ENCODE measurements at regions of chr6 and their contacts with region 1.

Region 1: GRCh38 chr6:73329201-73329600 is 24.9 kb downstream of the DPPA5 start:
- DNase-seq: no peak
- ATAC-seq: no peak
- H3K4me3 ChIP-seq: no peak overlapping the region
- H3K27ac ChIP-seq: no peak overlapping the region
- H3K4me1 ChIP-seq: no peaks in the 10 kb centered on the region; a peak in 1 of 5 replicates
- H3K27me3 ChIP-seq: peaks cover 3 to 9% of the 10 kb centered on the region in 2 experiments; a peak in 4 of 5 replicates
- CTCF ChIP-seq: no peak
- EP300 ChIP-seq: no peak
- POLR2A ChIP-seq: no peak
- RAD21 ChIP-seq: no peak

Region 2: GRCh38 chr6:72411872-72412708 is 917.1 kb before region 1 on chr6:
- CTCF ChIA-PET with region 1: interaction called, 3 read pairs
- POLR2A ChIA-PET with region 1: no interaction called
- in situ Hi-C with region 1: loop called (anchors 25 kb)
- intact Hi-C with region 1: no loop called
- DNase-seq: peak; percentile 85 to 86 (median 85)
- ATAC-seq: peak; percentile 87
- H3K4me3 ChIP-seq: no peak overlapping the region
- H3K27ac ChIP-seq: no peak overlapping the region
- H3K4me1 ChIP-seq: peaks cover 3 to 8% of the 10 kb centered on the region in 2 experiments; a peak in 3 of 5 replicates
- H3K27me3 ChIP-seq: no peaks in the 10 kb centered on the region
- CTCF ChIP-seq: peak; percentile 100
- EP300 ChIP-seq: no peak
- POLR2A ChIP-seq: no peak
- RAD21 ChIP-seq: peak; percentile 100

Region 3: DNA sequence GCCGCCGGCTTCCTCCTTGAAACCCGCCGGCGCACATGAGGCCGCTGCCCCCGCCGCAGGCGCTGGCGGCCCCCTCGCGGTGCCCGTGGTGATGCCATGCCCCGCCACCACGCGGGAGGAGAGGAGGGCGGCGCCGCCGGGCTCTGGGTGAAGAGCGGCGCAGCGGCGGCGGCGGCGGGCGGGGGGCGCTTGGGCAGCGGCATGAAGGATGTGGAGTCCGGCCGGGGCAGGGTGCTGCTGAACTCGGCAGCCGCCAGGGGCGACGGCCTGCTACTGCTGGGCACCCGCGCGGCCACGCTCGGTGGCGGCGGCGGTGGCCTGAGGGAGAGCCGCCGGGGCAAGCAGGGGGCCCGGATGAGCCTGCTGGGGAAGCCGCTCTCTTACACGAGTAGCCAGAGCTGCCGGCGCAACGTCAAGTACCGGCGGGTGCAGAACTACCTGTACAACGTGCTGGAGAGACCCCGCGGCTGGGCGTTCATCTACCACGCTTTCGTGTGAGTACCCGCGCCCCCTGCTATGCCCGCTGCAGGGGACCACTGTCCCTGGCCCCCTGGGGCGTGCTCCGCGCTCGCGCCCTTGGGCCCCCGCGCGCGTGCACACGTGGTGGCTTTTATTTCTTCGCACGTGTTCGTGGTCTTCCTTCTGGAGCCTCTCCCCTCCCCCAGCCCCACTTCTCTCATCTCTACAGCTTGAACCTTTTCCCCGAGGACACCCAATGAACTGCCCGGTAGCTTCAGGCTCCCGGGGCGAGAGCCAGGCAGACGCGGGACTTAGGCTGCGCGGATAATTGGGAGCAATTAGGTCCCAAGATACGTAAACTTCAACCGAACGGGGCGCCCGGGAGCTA is 706.9 kb before region 1 on chr6:
- CTCF ChIA-PET with region 1: no interaction called
- POLR2A ChIA-PET with region 1: interaction called, 3 read pairs
- in situ Hi-C with region 1: no loop called
- intact Hi-C with region 1: loop called (anchors 10 kb)
- DNase-seq: peak; percentile 49 to 60 (median 50)
- ATAC-seq: peak; percentile 58
- H3K4me3 ChIP-seq: peak overlapping the region; percentile 49
- H3K27ac ChIP-seq: peak overlapping the region; percentile 77
- H3K4me1 ChIP-seq: peaks cover 19 to 33% of the 10 kb centered on the region in 2 experiments; a peak in 4 of 5 replicates
- H3K27me3 ChIP-seq: no peaks in the 10 kb centered on the region
- CTCF ChIP-seq: peak in 1 of 3 experiments; percentile 25; a peak in 1 of 6 replicates
- EP300 ChIP-seq: no peak
- POLR2A ChIP-seq: no peak
- RAD21 ChIP-seq: no peak

Region 4: DNA sequence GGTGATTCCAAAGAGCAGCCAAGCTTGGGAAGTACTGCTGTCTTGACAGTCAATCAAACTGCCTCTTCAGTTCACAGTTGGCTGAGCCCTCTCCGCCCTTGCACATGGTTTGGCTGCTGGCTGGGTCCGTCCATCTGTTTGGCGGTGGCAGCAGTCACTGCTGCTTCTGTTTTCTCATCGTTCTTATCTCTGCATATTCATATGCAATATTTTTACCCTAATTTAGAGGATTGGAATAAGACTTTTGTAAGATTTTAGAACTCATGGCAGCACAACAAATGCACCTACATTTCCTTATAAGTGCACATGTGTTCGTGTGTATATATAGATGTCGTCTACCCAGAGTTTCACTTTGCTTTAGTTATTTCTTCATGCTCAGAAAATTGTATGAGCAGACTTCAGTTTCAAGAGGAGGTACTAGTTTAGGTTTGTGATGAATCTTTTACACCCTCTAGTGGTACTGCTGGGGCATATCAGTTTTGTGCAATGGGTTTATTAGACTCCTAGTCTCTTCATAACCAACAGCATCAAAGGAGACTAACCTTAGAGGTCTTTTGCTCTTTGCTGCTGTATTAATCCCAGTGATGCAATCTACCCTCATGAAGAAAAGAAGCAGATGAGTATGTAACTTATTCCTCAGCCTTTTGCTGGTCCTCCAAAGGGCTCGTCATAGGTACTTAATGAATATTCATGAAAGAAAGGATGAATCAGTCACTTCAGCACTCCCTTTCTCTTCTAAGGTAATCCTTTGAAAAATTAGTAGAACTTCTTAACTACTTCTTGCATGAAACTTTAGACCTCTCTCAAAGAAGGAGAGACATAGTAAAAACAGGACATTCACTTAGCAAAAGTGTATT is 148.2 kb before region 1 on chr6:
- CTCF ChIA-PET with region 1: no interaction called
- POLR2A ChIA-PET with region 1: no interaction called
- in situ Hi-C with region 1: no loop called
- intact Hi-C with region 1: loop called (anchors 5 kb)
- DNase-seq: peak; percentile 30 to 55 (median 42)
- ATAC-seq: peak; percentile 96
- H3K4me3 ChIP-seq: no peak overlapping the region
- H3K27ac ChIP-seq: no peak overlapping the region
- H3K4me1 ChIP-seq: no peaks in the 10 kb centered on the region; a peak in 1 of 5 replicates
- H3K27me3 ChIP-seq: no peaks in the 10 kb centered on the region
- CTCF ChIP-seq: peak; percentile 59 to 85 (median 80); a peak in 5 of 6 replicates
- EP300 ChIP-seq: no peak
- POLR2A ChIP-seq: no peak
- RAD21 ChIP-seq: peak; percentile 85 to 91

Region 5: DNA sequence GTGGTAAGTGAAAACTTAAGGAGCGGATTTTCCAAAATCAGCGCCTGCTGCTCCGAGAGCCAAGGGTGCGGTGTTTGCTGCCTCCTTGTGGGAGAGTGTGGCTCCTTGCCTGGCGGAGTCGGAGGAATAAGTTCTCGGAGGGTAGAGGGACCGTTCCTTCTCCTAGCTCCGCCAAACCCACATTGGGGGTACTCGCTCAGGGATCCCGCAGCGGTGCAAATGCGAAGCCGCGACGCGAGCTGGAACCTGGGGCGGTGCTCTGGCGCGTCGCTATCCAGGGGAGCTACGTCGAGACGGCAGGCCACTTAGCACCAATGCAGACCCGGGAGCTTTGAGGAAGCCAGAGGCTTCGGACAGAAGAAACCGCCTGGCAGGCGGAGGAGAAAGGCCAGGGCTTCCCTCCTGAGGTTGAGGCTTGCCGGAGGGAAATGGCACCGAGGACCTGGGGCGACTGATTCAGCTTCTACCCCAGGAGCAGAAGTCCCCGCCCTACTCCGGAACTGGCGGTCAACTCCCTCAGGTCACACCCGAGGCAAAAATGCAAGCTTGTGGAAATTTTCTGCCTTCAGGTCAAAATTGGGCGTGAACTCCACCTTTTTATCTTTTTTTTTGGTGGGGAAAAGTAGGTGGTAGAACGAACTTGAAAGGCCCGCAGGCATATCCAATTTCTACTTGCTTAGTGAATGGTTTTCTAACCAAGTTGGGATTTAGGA is 59.8 kb after region 1 on chr6:
- CTCF ChIA-PET with region 1: no interaction called
- POLR2A ChIA-PET with region 1: interaction called, 4 read pairs
- in situ Hi-C with region 1: no loop called
- intact Hi-C with region 1: loop called (anchors 5 kb)
- DNase-seq: peak; percentile 76 to 93 (median 84)
- ATAC-seq: peak; percentile 97
- H3K4me3 ChIP-seq: peak overlapping the region; percentile 57
- H3K27ac ChIP-seq: peak overlapping the region; percentile 89
- H3K4me1 ChIP-seq: peaks cover 7 to 8% of the 10 kb centered on the region in 2 experiments
- H3K27me3 ChIP-seq: no peaks in the 10 kb centered on the region
- CTCF ChIP-seq: peak; percentile 78 to 82 (median 81)
- EP300 ChIP-seq: peak; percentile 33; the same call in 1 of the 2 replicates
- POLR2A ChIP-seq: peak; percentile 91
- RAD21 ChIP-seq: peak; percentile 58 to 76

Region 6: GRCh38 chr6:73418081-73418741 is 89.0 kb after region 1 on chr6:
- CTCF ChIA-PET with region 1: no interaction called
- POLR2A ChIA-PET with region 1: no interaction called
- in situ Hi-C with region 1: no loop called
- intact Hi-C with region 1: no loop called
- DNase-seq: peak in 1 of 4 experiments; percentile 41
- ATAC-seq: no peak
- H3K4me3 ChIP-seq: no peak overlapping the region
- H3K27ac ChIP-seq: peak overlapping the region; percentile 43; the same call in 1 of the 3 replicates
- H3K4me1 ChIP-seq: peaks cover 10 to 20% of the 10 kb centered on the region in 2 experiments; a peak in 4 of 5 replicates
- H3K27me3 ChIP-seq: no peaks in the 10 kb centered on the region
- CTCF ChIP-seq: no peak
- EP300 ChIP-seq: no peak
- POLR2A ChIP-seq: no peak
- RAD21 ChIP-seq: no peak

Region 7: DNA sequence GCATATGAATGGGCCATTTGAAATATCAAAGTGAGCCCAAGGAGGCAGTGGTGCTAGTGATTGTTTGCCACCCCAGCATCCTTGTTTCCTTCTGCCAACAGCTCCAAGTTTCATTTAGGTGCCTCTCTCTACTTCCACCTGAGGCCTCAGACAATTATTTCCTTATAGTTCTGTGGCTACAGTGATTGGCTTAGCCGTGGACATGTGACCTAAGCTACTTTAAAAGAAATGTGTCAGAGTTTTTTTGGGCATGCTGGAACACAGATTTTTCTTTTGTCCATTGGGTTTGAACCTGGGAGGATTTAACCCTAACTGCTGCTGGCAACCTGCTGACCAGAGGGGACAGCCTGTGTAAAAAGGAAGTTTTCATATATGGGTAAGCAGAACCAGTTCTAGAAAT is 686.2 kb after region 1 on chr6:
- CTCF ChIA-PET with region 1: no interaction called
- POLR2A ChIA-PET with region 1: no interaction called
- in situ Hi-C with region 1: no loop called
- intact Hi-C with region 1: no loop called
- DNase-seq: no peak
- ATAC-seq: no peak
- H3K4me3 ChIP-seq: no peak overlapping the region
- H3K27ac ChIP-seq: no peak overlapping the region
- H3K4me1 ChIP-seq: no peaks in the 10 kb centered on the region
- H3K27me3 ChIP-seq: no peaks in the 10 kb centered on the region
- CTCF ChIP-seq: no peak
- EP300 ChIP-seq: no peak
- POLR2A ChIP-seq: no peak
- RAD21 ChIP-seq: no peak

Measured in K562 (cell line).